ENCODE measurements at regions of chr10 and their contacts with region 1.

Region 1: DNA sequence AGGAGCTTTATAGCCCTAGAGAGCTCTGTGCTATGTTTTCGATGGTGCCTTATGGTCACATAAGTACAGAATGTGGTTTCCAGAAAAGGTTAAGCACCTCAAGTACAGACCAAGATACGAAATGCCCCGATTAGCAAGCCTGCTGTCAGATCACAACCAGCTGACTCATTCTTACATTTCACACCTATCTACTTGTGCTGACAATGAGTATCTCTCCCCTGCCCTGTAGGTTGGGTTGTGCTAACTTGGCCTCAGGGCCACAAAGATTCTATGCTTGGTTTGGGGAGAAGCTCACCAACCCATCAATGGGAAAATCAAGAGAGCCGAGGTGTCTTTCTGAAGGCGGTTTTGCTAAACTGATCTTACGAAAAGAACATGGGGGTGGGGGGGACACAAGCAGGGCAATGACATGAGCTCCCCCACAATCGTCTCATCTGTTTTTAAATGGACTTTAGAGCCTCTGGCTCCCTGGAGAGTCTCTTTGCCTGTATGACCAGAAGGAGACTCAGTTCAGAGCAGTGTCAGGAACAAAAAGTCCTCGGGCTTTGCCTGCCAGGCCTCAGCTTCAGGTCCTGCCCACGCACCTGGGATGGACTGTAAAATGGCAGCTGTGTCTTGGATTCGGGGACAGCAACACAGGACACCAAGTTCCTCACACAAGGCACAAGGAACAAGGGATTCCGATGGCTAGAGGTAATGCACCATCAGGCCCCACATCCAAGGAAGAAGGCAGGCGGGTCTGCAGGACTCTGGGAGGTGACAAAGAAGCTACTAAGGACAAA is 55.1 kb downstream of the FAM53B start:
- DNase-seq: no peak
- ATAC-seq: peak; percentile 45 to 57

Region 2: DNA sequence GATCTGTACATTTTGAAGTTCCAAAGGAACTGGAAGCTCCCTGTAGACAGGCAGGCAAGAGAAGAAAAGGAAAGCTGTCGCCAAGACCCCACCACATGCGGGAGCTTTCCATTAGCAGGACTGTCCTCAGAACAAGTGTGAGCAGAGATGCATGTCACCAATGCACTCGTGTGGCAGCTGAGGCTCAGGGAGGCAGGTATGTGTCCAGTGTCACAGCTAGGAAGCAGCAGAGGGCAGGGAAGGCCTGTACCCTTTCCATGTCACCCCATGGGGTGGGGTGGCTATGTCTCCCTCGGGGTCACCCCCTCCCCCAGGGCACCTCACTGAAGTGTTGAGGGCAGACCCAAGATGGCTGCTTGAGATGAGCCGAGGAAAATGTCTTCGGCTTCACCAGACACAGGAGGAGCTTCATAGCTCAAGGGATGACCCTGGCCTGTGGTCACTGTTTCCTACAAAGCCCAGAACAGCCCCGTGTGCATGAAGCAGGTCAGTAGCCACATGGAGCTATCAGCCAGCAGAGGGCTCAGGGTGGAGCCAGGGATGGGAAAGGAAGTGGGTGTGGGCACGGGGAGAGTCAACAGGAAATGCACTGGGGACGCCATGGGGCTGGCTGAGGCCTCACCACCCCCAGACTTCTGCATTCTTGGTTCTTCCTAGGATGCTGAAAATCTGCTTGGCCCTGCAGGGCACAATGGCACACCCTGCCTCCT is 41.5 kb before region 1 on chr10:
- intact Hi-C with region 1: no loop called
- DNase-seq: peak; percentile 80
- ATAC-seq: peak; percentile 38 to 73

Region 3: GRCh38 chr10:124732931-124733570 is 44.0 kb after region 1 on chr10:
- intact Hi-C with region 1: loop called in 1 of 2 experiments (anchors 10 kb)
- DNase-seq: peak; percentile 72
- ATAC-seq: peak; percentile 36 to 55

Measured in left cardiac atrium (tissue), 4 donors.